PC-3 (cell line): ENCODE measurements at regions of chr1 and their contacts with region 1.

Region 1: DNA sequence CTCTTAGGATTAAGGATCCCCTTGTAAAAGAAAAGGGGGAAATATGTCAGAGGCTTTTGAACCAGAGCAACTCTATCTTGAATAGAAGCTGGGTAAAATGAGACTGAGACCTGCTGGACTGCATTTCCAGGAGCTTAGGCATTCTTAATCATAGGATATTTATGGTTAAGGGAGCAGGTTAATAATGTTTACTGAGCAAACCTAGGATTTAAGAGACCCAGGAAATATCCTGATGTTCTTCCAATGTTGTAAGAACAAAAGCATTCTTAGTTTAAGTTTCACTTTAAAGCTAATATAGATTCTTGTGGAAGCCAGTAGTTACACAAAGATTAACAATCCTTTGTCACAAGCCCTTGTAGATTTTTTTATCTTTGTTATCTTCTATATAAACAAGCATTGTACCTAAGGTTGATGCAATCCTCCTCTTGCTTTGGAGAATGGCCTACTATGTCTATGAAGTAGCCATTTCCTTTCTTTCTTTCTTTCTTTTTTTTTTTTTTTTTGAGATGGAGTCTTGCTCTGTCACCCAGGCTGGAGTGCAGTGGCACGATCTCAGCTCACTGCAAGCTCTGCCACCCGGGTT is 570.2 kb upstream of the BEND5 start:
- DNase-seq: peak; percentile 95
- ATAC-seq: peak; percentile 90
- H3K4me3 ChIP-seq: 0 out of 2 replicates have a peak overlapping the region, but pooled peaks have one; percentile 8
- H3K27ac ChIP-seq: peak overlapping the region; percentile 92
- H3K4me1 ChIP-seq: peaks cover 51% of the 10 kb centered on the region
- H3K27me3 ChIP-seq: no peaks in the 10 kb centered on the region
- CTCF ChIP-seq: no peak

Region 2: DNA sequence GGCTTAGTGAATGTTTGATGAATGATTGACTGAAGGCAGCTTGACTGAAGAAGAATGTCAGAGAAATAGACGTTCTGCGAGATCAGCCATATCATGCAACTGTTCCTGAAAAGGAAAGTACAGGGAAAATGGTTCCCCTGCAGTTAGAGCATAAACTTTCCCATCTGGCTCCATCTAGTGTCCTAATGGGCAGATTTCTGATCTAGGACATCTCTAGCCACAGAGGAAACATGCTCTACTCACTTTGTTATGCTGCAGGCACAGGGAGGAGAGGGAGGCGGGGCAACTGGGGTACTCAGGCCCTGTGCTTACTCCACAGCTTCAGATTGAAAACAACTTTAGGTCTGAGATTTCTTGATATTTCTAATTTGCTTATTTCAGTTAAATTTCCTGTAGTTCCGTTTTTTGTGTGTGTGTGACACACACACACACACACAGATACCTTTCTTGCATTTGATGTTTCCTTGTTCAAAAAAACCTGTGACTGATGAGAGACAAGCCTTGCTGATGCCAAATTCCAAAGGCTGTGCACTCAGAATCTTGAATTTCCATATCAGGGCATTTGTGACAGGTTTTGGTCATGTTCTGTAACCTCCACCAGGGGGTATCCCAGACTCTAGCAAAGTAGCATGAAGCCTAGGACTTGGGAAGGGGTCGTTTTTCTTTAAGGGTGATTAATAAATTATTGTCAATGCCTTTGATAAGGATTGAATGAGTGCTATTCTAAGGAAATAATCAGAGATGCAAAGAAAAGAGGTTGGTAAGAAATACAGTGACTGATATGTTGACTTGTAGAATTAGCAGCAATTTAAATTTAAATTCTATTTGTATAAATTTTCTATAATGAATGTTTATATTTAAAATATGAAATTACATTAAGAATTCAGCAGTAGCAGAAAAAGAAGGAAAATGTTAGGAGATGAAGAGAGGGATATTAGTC is 430.5 kb before region 1 on chr1:
- CTCF ChIA-PET with region 1: no interaction called
- POLR2A ChIA-PET with region 1: no interaction called
- intact Hi-C with region 1: loop called (anchors 5 kb)
- DNase-seq: peak; percentile 78
- ATAC-seq: peak; percentile 92
- H3K4me3 ChIP-seq: no peak overlapping the region
- H3K27ac ChIP-seq: 0 out of 2 replicates have a peak overlapping the region, but pooled peaks have one; percentile 13
- H3K4me1 ChIP-seq: peaks cover 18% of the 10 kb centered on the region; the same call in 1 of the 2 replicates
- H3K27me3 ChIP-seq: no peaks in the 10 kb centered on the region
- CTCF ChIP-seq: peak; percentile 72

Region 3: DNA sequence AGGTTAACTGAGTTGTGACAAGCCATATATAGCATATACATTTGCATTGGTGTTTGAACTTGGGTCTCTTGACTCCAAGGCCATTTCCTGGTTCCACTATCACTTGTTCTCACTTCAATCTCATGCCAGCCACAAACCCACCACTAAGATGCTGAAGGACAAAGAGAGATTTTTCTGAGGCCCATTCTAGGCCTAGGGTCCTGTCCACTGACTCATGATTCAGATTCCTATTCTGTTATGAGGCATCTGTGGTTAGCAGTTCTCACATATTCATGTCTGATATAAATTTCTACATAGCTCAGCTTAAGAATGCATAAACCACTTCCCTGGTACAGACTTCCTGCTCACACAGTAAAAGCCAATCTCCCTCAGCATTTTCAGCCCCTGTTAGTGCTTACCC is 244.1 kb before region 1 on chr1:
- CTCF ChIA-PET with region 1: no interaction called
- POLR2A ChIA-PET with region 1: no interaction called
- intact Hi-C with region 1: loop called (anchors 5 kb)
- DNase-seq: peak; percentile 83
- ATAC-seq: peak; percentile 79
- H3K4me3 ChIP-seq: no peak overlapping the region
- H3K27ac ChIP-seq: peak overlapping the region; percentile 52
- H3K4me1 ChIP-seq: peaks cover 40% of the 10 kb centered on the region
- H3K27me3 ChIP-seq: no peaks in the 10 kb centered on the region
- CTCF ChIP-seq: no peak

Region 4: GRCh38 chr1:49323925-49324540 is 22.8 kb before region 1 on chr1:
- CTCF ChIA-PET with region 1: no interaction called
- POLR2A ChIA-PET with region 1: no interaction called
- intact Hi-C with region 1: loop called (anchors 2 kb)
- DNase-seq: no peak
- ATAC-seq: no peak
- H3K4me3 ChIP-seq: no peak overlapping the region
- H3K27ac ChIP-seq: no peak overlapping the region
- H3K4me1 ChIP-seq: peaks cover 30% of the 10 kb centered on the region
- H3K27me3 ChIP-seq: no peaks in the 10 kb centered on the region
- CTCF ChIP-seq: no peak

Region 5: DNA sequence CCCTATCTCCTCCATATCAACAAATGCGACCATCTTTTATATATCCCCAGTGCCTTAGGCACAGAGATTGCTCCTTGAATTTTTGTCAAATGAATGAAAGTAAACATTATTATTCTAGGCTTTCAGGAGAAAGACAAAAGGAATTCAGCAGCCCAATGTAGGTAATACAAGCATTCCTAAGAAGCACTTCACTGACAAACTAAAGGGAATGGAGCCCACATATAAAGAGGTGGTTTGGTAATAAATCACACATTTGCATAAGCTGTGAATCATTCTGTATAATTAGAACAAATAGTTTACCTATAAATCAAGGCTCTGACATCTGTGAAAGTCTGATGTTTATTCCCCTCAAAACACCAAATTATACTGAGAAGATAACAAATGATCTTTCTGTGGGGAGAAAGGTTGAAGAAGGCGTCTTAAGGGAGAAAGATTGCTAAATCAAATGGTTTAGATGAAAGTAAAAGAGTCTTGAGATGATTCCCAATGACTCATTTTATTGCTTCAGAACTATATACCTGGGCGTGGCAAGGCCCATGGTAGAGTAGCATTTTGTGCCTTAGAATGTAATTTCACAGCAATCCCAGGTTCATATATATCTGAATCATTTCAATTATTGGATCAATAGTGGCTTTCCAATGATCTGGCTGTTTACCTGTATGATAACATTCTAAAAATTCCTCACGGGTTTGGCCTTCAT is 118.8 kb after region 1 on chr1:
- CTCF ChIA-PET with region 1: no interaction called
- POLR2A ChIA-PET with region 1: interaction called, 3 read pairs
- intact Hi-C with region 1: loop called (anchors 5 kb)
- DNase-seq: peak; percentile 82
- ATAC-seq: peak; percentile 69
- H3K4me3 ChIP-seq: no peak overlapping the region; the same call in 1 of the 2 replicates
- H3K27ac ChIP-seq: peak overlapping the region; percentile 71
- H3K4me1 ChIP-seq: peaks cover 45% of the 10 kb centered on the region
- H3K27me3 ChIP-seq: no peaks in the 10 kb centered on the region
- CTCF ChIP-seq: no peak